T-cell (primary cell): ENCODE measurements at regions of chr14 and their contacts with region 1.

Region 1: DNA sequence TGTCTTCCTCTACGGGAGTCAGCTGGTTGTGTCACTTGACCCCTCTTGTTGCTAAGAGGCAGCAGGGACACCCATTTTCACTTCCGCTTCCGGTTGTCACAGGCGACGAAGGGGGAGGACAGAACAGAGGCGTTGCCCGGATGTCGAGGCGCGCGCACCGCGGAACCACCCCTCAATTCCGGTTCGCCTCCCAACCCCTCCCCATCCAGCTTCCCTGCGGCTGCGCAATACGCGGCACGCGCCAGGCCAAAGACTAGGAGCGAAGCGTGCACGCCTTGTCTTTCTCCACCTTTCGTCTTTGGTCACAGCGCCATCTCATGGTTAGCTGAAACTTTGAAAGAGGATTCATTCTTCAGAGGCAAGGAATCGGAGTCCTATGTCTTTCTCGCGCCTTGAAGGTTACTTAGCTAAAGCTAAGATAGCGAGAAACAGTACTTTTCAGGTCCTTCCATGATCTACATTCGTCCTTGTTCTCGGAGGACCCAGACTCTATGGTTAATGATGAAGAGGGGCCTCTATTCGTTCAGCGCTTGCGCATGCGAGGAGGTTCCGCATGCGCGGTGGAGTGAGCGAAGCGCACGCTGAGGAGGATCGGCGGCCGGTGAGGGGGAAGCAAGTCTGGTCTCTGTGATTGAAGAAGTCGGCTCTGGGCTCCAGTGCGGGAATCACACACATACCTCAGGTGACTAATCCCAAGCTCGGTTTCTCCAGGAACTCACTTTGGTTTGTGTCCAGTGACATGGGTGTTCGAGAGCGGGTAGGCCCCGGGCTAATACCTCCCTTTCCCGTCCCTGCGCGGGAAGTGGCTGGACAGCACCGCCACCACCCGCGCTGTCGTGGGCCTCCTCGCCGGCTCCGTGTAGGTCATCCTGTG is at the starts of genes ATP6V1D and EIF2S1:
- DNase-seq: peak; percentile 95 to 100 (median 99)
- ATAC-seq: peak; percentile 88 to 96 (median 94)
- H3K4me3 ChIP-seq: peak within 1 kb of the TSS; percentile 97 to 99
- H3K4me3 Mint-ChIP-seq: peak within 1 kb of the TSS; percentile 92 to 99 (median 97)
- H3K27ac ChIP-seq: peak within 1 kb of the TSS; percentile 94
- H3K27ac Mint-ChIP-seq: peak within 1 kb of the TSS; percentile 95 to 97
- H3K4me1 ChIP-seq: peaks cover 26 to 37% of the 10 kb centered on the region in 2 experiments
- H3K4me1 Mint-ChIP-seq: peaks cover 78 to 84% (median 83%) of the 10 kb centered on the region in 3 donors
- H3K27me3 ChIP-seq: no peaks in the 10 kb centered on the region
- H3K27me3 Mint-ChIP-seq: no peaks in the 10 kb centered on the region
- total RNA-seq, gene ATP6V1D: 20.9 to 31.1 (median 24.5) TPM
- total RNA-seq, gene EIF2S1: 38.8 to 66.0 (median 57.0) TPM

Region 2: GRCh38 chr14:67240978-67241414 is 119.0 kb before region 1 on chr14:
- CTCF ChIA-PET with region 1: interaction called in 1 of 2 experiments, 10 read pairs
- POLR2A ChIA-PET with region 1: no interaction called
- DNase-seq: peak; percentile 84 to 95 (median 89)
- ATAC-seq: peak; percentile 92 to 94 (median 94)
- H3K4me3 ChIP-seq: peak overlapping the region; percentile 68 to 87
- H3K4me3 Mint-ChIP-seq: peak overlapping the region; percentile 85 to 90 (median 88)
- H3K27ac ChIP-seq: peak overlapping the region; percentile 31
- H3K27ac Mint-ChIP-seq: peak overlapping the region in 1 of 2 donors; percentile 77
- H3K4me1 ChIP-seq: peaks cover 7 to 9% of the 10 kb centered on the region in 2 experiments
- H3K4me1 Mint-ChIP-seq: peaks cover 24 to 36% (median 27%) of the 10 kb centered on the region in 3 donors
- H3K27me3 ChIP-seq: no peaks in the 10 kb centered on the region
- H3K27me3 Mint-ChIP-seq: no peaks in the 10 kb centered on the region